Esophagus muscularis mucosa (tissue), 4 donors: ENCODE measurements at regions of chr12 and their contacts with region 1.

Region 1: GRCh38 chr12:26011099-26011498 is 52.6 kb downstream of the RASSF8 start:
- DNase-seq: no peak
- H3K4me3 ChIP-seq: no peak overlapping the region
- H3K27ac ChIP-seq: peak overlapping the region; percentile 73 to 88 (median 82)
- H3K4me1 ChIP-seq: peaks cover 34 to 68% (median 51%) of the 10 kb centered on the region in 4 donors
- H3K27me3 ChIP-seq: no peaks in the 10 kb centered on the region
- CTCF ChIP-seq: no peak
- EP300 ChIP-seq: no peak
- POLR2A ChIP-seq: no peak

Region 2: GRCh38 chr12:25970916-25971653 is 40.0 kb before region 1 on chr12:
- intact Hi-C with region 1: loop called (anchors 5 kb)
- DNase-seq: no peak
- H3K4me3 ChIP-seq: no peak overlapping the region
- H3K27ac ChIP-seq: peak overlapping the region; percentile 37 to 63 (median 48)
- H3K4me1 ChIP-seq: peaks cover 46 to 91% (median 89%) of the 10 kb centered on the region in 4 donors
- H3K27me3 ChIP-seq: no peaks in the 10 kb centered on the region
- CTCF ChIP-seq: peak in 2 of 3 experiments; percentile 8 to 47
- EP300 ChIP-seq: no peak
- POLR2A ChIP-seq: no peak